ENCODE measurements at regions of chr9 and their contacts with region 1.

Region 1: DNA sequence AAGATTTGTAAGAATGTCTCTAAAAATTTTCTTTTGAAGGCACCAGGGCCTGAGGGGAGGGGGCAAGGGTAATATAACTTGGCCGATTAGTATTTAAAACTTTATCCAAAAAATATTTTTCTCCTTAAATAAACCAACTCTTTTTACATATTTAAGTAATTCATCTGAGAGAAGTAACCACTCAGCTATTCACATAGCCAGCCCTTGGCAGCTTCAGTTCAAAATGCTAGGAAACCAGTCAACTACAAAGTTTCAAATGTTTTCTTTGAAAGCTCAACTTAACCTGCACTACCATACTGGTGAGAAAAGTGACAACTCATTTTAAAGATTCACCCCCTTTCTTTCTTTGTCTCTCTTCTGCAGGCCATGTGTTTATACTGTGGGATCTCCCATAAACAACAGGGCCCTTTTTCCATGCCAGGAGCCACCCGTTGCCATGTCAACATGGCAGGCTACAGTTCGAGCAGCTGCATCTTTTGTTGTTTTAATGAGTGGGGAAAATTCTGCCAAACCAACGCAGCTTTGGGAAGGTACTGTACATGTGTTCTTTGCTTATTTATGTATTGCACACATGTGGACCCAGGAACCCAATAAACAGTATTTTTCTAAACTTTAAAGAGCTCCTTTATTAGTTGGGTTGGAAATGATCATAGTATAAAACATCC is 46.3 kb downstream of the AOPEP start:
- DNase-seq: no peak
- H3K4me3 ChIP-seq: no peak overlapping the region
- H3K27ac ChIP-seq: peak overlapping the region; percentile 74 to 79
- H3K4me1 ChIP-seq: peaks cover 3 to 11% of the 10 kb centered on the region in 2 donors
- H3K27me3 ChIP-seq: no peaks in the 10 kb centered on the region
- CTCF ChIP-seq: no peak

Region 2: DNA sequence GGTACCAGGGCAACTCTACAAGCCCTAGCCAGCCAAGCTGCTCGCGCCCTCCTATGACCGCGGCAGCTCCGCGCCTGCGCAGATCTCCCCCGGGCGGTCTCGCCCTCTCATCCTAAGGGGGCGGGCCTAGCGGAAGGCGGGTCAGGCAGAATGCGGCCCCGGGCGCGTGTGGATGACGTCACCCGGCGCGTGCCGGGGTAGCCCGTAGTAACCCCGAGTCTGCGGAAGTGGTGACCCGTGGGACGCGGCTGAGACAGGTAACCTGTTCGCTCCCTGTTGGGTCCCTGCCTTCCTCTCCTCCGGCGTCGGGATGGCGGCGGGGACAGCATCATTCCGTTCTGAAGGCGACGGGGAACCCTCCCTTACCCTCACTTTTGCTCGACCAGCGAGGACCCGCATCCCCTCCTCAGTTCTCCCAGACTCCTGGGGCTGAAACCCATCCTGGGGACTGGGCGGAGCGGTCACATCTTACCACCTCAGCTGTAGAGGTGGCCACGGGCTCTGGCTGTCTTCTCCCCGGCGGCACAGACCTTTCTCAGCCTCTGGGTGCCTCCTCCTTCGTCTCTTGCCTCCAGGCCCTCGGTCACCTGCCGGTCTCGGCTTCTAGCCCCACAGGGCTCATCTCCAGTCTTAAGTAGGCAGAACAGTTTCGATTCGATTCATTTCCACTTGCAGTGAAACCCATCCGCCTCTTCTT is 46.1 kb before region 1 on chr9 and contains the start of gene AOPEP:
- intact Hi-C with region 1: loop called (anchors 5 kb)
- DNase-seq: peak; percentile 89 to 99
- H3K4me3 ChIP-seq: peak within 1 kb of the TSS; percentile 66 to 89
- H3K27ac ChIP-seq: peak within 1 kb of the TSS; percentile 83
- H3K4me1 ChIP-seq: peaks cover 0 to 9% of the 10 kb centered on the region in 2 donors
- H3K27me3 ChIP-seq: no peaks in the 10 kb centered on the region
- CTCF ChIP-seq: no peak
- total RNA-seq, gene AOPEP: 333 TPM

Region 3: DNA sequence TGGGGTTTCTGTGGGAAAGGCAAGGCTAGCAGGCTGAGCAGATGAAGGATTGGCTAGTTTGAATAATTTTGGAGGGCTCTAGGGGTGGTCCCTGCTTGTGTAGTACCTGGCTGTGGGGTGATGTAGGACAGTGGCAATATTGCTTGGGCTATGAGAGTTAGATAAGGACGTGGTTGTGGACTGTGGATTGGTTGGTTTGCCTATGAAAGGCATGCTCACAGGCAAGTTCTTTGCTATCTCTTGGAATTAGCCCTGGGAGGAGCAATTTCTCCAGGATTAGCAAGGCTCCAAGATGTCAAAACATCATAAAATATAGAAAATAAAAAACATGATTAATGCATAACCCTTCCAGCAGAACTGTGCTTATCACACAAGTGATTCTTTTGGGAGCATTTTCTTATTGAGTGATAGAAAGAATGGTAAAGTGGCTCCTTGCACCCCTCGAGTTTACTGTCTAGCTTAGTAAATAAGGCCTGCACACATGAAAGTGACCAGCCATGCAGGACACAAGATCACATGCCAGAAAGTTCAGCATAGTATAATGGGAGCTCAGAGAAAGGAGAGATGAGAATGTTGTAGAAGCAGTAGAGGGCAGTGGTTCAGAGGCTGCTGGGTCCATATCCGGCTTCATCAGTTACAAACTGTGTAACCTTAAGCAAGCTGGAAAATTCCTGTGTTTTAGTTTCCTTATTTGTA is 32.5 kb before region 1 on chr9:
- intact Hi-C with region 1: loop called (anchors 2 kb)
- DNase-seq: no peak
- H3K4me3 ChIP-seq: no peak overlapping the region
- H3K27ac ChIP-seq: peak overlapping the region; percentile 5 to 38
- H3K4me1 ChIP-seq: no peaks in the 10 kb centered on the region
- H3K27me3 ChIP-seq: no peaks in the 10 kb centered on the region
- CTCF ChIP-seq: peak in 2 of 3 experiments; percentile 21 to 39

Measured in ascending aorta (tissue), 2 donors.